Activated B cell treated with CpG ODN at 0.5 μM for 24 hours (primary cell): ENCODE measurements at regions of chr6 and their contacts with region 1.

Region 1: DNA sequence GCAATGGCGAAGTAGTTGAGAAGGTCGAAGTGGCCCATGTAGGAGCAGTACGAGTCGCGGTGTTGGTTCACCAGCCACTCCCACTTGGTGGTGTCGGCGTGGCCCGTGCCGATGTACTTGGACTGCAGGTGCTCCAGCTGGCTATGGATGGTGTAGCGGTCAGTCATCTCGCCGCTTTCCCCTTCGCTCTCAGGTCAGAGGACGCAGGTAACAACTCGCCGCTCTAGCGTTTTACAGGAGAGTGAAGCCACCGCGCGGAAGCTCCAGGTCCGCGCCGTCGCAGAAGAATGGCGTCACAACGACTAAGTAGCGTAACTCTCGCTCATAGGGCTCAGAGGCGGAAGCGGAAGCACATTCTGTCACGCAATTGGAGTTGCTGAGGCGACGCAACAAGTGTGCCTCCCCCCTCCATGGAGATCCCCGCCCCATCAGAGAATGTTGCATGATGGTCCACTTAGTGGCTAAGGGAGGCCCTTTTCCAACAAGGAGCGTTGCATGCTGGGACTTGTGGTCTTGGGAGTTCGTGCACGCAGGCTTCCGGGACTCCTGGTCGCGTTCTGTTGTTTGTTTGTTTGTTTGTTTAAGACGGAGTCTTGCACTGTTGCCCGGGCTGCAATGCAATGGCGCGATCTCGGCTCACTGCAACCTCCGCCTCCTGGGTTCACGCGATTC is at the start of gene SF3B5:
- DNase-seq: peak; percentile 93
- ATAC-seq: peak; percentile 96
- H3K4me3 Mint-ChIP-seq: peak within 1 kb of the TSS; percentile 99
- H3K27ac Mint-ChIP-seq: peak within 1 kb of the TSS; percentile 99
- H3K4me1 Mint-ChIP-seq: peaks cover 24% of the 10 kb centered on the region
- H3K27me3 Mint-ChIP-seq: no peaks in the 10 kb centered on the region
- CTCF ChIP-seq: no peak
- total RNA-seq, gene SF3B5: 144 and 147 TPM in 2 replicates

Region 2: GRCh38 chr6:143940011-143940597 is 155.4 kb before region 1 on chr6:
- CTCF ChIA-PET with region 1: interaction called, 7 read pairs
- POLR2A ChIA-PET with region 1: no interaction called
- intact Hi-C with region 1: loop called (anchors 2 kb)
- DNase-seq: no peak
- ATAC-seq: peak; percentile 98
- H3K4me3 Mint-ChIP-seq: no peak overlapping the region
- H3K27ac Mint-ChIP-seq: no peak overlapping the region
- H3K4me1 Mint-ChIP-seq: no peaks in the 10 kb centered on the region
- H3K27me3 Mint-ChIP-seq: no peaks in the 10 kb centered on the region
- CTCF ChIP-seq: no peak

Region 3: DNA sequence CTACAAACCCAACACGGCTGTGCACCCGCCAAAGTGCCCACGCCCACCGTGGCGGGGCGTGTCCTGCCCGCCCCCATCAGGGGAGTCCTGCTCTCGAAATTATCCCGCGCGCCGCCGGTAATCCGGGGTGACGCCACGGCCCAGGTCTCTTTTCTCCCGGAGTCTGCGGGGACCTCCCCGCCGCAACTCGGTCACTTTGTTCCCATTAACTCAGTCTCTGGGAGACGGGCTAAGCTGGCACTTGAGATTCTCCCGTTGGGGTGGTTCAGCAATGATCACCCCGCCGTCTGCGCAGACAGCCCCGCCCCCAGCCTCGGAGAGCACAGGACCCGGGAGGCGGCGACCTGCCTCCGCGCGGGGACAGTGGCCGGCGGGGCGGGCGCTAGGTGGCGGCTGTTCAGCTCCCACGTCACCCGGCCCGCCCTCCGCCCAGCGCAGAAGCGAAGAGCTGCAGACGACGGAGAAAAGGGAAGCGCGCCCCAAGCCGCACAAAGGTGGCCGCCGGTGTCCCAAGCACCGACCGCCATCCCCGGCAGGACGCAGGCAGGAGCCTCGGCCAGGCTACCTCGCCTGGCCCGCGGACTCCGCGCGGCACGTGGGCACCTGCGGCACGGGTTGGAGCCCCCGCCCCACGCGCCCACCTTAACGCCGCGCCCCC is 31.6 kb before region 1 on chr6:
- CTCF ChIA-PET with region 1: no interaction called
- POLR2A ChIA-PET with region 1: interaction called, 50 read pairs
- intact Hi-C with region 1: loop called (anchors 1 kb)
- DNase-seq: peak; percentile 91
- ATAC-seq: peak; percentile 93
- H3K4me3 Mint-ChIP-seq: peak overlapping the region; percentile 94
- H3K27ac Mint-ChIP-seq: peak overlapping the region; percentile 89
- H3K4me1 Mint-ChIP-seq: peaks cover 36% of the 10 kb centered on the region
- H3K27me3 Mint-ChIP-seq: no peaks in the 10 kb centered on the region
- CTCF ChIP-seq: no peak

Region 4: DNA sequence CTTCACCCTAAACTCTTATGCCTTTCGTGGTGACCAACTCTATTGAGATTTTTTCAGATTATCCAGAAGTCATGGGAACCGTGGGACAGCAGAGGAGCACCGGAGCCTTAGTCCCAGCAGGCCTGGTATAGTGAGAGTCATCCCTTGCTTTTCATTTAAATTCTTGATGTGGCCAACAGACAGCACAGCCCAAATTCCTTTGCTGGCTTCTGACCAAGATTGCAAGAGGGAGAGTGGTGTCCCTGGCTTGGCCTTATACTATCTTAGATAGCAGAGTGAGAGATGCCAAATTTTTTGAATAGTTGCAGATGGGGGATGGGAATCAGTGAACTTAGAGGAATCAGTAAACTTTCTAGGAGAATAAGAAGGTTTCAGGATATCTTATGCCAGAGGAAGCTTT is 62.7 kb after region 1 on chr6:
- CTCF ChIA-PET with region 1: no interaction called
- POLR2A ChIA-PET with region 1: no interaction called
- intact Hi-C with region 1: no loop called
- DNase-seq: no peak
- ATAC-seq: no peak
- H3K4me3 Mint-ChIP-seq: no peak overlapping the region
- H3K27ac Mint-ChIP-seq: no peak overlapping the region
- H3K4me1 Mint-ChIP-seq: peaks cover 48% of the 10 kb centered on the region
- H3K27me3 Mint-ChIP-seq: no peaks in the 10 kb centered on the region
- CTCF ChIP-seq: no peak

Region 5: DNA sequence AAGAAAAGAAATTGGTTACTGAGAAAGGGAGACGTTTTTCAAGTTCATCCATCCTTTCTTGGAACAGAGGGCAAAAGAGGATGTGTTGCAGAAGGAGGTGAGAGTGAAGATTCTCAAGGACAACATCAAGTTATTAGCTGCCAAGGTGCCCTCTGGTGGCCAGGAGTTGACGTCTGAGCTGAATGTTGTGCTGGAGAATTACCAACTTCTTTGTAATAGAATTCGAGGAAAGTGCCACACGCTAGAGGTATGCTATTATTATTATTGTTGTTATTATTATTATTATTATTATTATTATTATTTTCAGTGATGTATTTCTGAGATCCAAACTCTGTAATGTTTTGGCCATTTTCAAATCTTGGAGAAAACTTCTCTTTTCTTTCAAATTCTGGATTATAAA is 386.7 kb after region 1 on chr6:
- CTCF ChIA-PET with region 1: interaction called, 11 read pairs
- POLR2A ChIA-PET with region 1: no interaction called
- intact Hi-C with region 1: no loop called
- DNase-seq: peak; percentile 39
- ATAC-seq: peak; percentile 91
- H3K4me3 Mint-ChIP-seq: no peak overlapping the region
- H3K27ac Mint-ChIP-seq: peak overlapping the region; percentile 41
- H3K4me1 Mint-ChIP-seq: no peaks in the 10 kb centered on the region
- H3K27me3 Mint-ChIP-seq: no peaks in the 10 kb centered on the region
- CTCF ChIP-seq: no peak

Region 6: GRCh38 chr6:145963216-145964068 is 1868.0 kb after region 1 on chr6:
- CTCF ChIA-PET with region 1: no interaction called
- POLR2A ChIA-PET with region 1: no interaction called
- intact Hi-C with region 1: loop called (anchors 5 kb)
- DNase-seq: peak; percentile 44
- ATAC-seq: peak; percentile 4
- H3K4me3 Mint-ChIP-seq: peak overlapping the region; percentile 99
- H3K27ac Mint-ChIP-seq: peak overlapping the region; percentile 96
- H3K4me1 Mint-ChIP-seq: peaks cover 45% of the 10 kb centered on the region
- H3K27me3 Mint-ChIP-seq: no peaks in the 10 kb centered on the region
- CTCF ChIP-seq: no peak